Psoas muscle (tissue), 8 donors: ENCODE measurements at regions of chrX and their contacts with region 1.

Region 1: DNA sequence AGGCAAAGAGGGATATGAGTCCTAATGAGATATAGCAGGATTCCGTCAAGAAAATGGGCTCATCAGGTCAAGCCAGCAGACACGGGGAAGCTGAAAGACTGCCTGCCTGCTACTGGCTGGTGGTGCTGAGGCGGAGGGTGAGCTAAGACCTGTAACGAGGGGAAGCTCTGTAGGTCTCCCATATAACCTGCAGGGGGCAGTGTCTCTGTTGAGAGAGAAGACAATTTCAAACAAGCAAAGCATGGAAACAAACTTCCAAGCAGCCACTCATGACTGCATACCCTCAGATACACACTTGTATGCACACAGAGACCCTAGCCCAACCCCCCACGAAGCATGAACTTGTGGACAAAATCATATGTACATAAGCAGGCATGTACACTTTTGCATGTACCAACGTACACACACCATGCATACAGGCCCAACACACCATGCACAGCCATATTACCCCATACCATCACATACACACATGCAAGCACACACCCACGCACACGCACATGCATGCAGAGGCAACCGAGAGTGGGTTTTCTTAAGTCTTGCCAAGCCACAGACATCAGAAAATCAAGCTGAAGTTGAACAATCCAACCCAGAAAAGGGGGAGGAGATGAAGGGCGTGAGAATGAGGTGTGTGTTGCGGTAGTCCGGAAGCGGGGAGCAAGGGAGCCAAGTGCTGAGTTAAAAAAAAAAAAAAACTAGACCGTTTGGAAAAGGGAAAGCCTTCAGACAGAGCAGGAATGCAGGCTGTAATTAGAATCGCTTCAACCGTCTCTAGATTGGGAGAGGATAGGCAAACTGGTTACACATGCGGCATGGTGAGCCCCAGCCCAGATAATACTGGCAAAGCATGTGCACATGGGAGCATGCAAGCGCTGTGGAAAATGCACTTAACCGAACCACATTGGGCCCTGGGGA is 71.0 kb downstream of the PJA1 start:
- DNase-seq: no peak
- ATAC-seq: peak in 3 of 4 donors; percentile 65 to 73 (median 69)
- H3K4me3 ChIP-seq: no peak overlapping the region
- H3K27ac ChIP-seq: no peak overlapping the region
- H3K4me1 ChIP-seq: no peaks in the 10 kb centered on the region
- H3K27me3 ChIP-seq: peaks cover 0 to 22% (median 0%) of the 10 kb centered on the region in 3 donors
- CTCF ChIP-seq: peak; percentile 53

Region 2: GRCh38 chrX:69133921-69134542 is 39.8 kb after region 1 on chrX:
- intact Hi-C with region 1: loop called in 1 of 2 experiments (anchors 1 kb)
- DNase-seq: no peak
- ATAC-seq: peak in 2 of 4 donors; percentile 45 to 52
- H3K4me3 ChIP-seq: no peak overlapping the region
- H3K27ac ChIP-seq: no peak overlapping the region
- H3K4me1 ChIP-seq: no peaks in the 10 kb centered on the region
- H3K27me3 ChIP-seq: peaks cover 0 to 31% (median 0%) of the 10 kb centered on the region in 3 donors
- CTCF ChIP-seq: peak; percentile 27

Region 3: DNA sequence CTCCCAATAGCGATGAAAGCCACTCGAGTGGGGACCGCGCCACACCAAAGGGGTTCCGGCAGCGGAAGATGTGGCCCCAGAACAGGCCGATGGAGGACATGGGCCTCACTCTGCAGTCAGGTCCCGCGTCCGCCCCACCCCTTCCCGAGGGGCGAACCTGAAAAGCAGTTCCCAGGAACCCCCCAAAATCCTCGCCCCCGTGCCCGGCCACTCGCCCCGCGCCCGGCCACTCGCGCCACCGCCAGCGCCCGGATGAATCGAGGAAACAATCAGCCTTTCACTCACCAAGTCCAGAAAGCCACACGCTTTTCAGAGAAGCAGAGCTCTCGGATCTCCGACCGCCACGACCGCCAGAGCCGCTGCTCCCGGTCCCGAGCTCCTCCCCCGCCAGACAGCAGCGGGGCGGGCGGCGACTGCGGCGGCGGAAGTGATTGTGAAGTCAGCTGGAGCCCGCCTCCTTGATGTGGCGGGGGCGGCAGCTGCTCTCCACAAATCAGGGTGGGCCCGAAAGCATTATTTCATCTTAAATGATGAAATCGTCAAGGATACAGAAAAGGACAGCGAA is 71.0 kb after region 1 on chrX and contains the start of gene PJA1:
- intact Hi-C with region 1: loop called in 1 of 2 experiments (anchors 5 kb)
- DNase-seq: peak; percentile 74 to 83
- ATAC-seq: peak; percentile 83 to 97 (median 92)
- H3K4me3 ChIP-seq: peak within 1 kb of the TSS; percentile 76
- H3K27ac ChIP-seq: peak within 1 kb of the TSS; percentile 70
- H3K4me1 ChIP-seq: no peaks in the 10 kb centered on the region
- H3K27me3 ChIP-seq: peaks cover 0 to 7% (median 0%) of the 10 kb centered on the region in 3 donors
- CTCF ChIP-seq: no peak
- total RNA-seq, gene PJA1: 3.5 to 13.4 (median 5.9) TPM

Region 4: GRCh38 chrX:69222103-69223090 is 128.2 kb after region 1 on chrX:
- intact Hi-C with region 1: loop called in 1 of 2 experiments (anchors 2 kb)
- DNase-seq: peak; percentile 56 to 80
- ATAC-seq: peak; percentile 75 to 88 (median 83)
- H3K4me3 ChIP-seq: no peak overlapping the region
- H3K27ac ChIP-seq: no peak overlapping the region
- H3K4me1 ChIP-seq: no peaks in the 10 kb centered on the region
- H3K27me3 ChIP-seq: peaks cover 0 to 13% (median 0%) of the 10 kb centered on the region in 3 donors
- CTCF ChIP-seq: peak; percentile 75

Region 5: GRCh38 chrX:69285881-69286564 is 191.8 kb after region 1 on chrX:
- intact Hi-C with region 1: loop called in 1 of 2 experiments (anchors 10 kb)
- DNase-seq: peak; percentile 68 to 78
- ATAC-seq: peak; percentile 76 to 91 (median 82)
- H3K4me3 ChIP-seq: peak overlapping the region; percentile 55
- H3K27ac ChIP-seq: no peak overlapping the region
- H3K4me1 ChIP-seq: peaks cover 6% of the 10 kb centered on the region
- H3K27me3 ChIP-seq: peaks cover 0 to 32% (median 0%) of the 10 kb centered on the region in 3 donors
- CTCF ChIP-seq: peak; percentile 79